ENCODE measurements at regions of chr10 and their contacts with region 1.

Region 1: DNA sequence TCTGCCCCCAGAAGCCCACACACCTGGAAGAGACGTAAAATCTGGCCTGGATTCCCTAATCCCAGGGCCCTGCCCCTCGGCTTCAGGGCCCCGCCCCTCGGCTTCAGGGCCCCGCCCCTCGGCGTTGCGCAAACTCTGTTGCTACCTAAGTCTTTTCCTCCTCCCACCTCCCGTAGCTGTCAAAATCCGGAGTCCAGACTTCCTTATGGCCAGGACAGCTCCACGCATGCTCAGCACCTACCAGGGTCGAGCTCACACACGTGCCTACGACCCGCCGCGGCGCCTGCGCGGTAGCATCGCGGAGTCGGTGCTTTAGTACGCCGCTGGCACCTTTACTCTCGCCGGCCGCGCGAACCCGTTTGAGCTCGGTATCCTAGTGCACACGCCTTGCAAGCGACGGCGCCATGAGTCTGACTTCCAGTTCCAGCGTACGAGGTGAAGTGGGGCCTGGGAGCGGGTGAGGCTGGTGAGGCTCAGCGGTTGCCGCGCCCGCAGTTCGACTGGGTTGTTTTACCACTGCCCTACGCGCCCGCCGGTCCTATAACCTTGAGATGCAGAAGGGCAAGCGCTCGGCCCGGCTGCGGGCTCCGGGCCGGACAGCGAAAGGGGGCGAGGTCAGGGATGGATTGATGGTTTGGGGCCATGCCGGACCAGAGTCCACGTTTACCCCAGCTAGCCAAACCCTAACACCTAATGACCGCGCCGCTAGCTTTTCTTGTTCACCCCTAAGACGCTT is at the start of gene CISD1:
- DNase-seq: peak; percentile 87 to 97 (median 94)

Region 2: DNA sequence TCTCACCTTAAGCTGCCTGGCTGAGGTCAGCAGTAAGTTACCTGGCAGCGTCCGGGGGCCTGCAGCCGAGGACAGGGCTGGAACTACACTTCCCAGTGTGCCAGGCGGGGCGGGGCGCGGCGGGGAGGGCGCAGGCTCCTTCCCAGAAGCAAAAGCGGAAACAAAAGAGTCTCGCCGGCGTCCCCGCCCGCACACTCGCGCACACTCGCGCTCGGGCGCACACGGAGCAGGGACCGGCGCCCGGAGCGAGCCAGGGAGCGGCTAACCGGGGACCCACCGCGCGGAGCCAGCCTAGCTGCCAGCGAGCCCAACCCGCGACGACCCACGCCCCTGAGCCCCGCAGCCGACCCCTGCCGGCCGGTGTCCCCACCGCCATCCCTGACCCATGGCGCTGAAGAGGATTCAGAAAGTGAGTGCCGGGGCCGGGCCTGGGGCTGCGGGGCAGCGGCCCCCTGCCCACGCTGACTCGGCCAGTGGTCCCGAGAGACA is 65.8 kb after region 1 on chr10 and contains the start of gene UBE2D1:
- intact Hi-C with region 1: loop called (anchors 5 kb)
- DNase-seq: peak; percentile 85 to 97 (median 94)